Sigmoid colon (tissue), 7 donors: ENCODE measurements at regions of chr7 and their contacts with region 1.

Region 1: GRCh38 chr7:107579885-107580715 is at the start of gene BCAP29:
- DNase-seq: peak; percentile 84
- H3K4me3 ChIP-seq: peak within 1 kb of the TSS; percentile 60 to 92 (median 75)
- H3K27ac ChIP-seq: peak within 1 kb of the TSS; percentile 92 to 96 (median 94)
- H3K4me1 ChIP-seq: peaks cover 0 to 39% (median 25%) of the 10 kb centered on the region in 4 donors
- H3K27me3 ChIP-seq: no peaks in the 10 kb centered on the region
- CTCF ChIP-seq: peak in 1 of 4 experiments; percentile 4
- EP300 ChIP-seq: no peak
- POLR2A ChIP-seq: no peak
- total RNA-seq, gene BCAP29: 104 to 173 (median 137) TPM

Region 2: GRCh38 chr7:107725151-107725740 is 145.1 kb after region 1 on chr7:
- intact Hi-C with region 1: loop called (anchors 5 kb)
- DNase-seq: no peak
- H3K4me3 ChIP-seq: no peak overlapping the region
- H3K27ac ChIP-seq: no peak overlapping the region
- H3K4me1 ChIP-seq: no peaks in the 10 kb centered on the region
- H3K27me3 ChIP-seq: no peaks in the 10 kb centered on the region
- CTCF ChIP-seq: peak; percentile 44 to 69 (median 50)
- EP300 ChIP-seq: no peak
- POLR2A ChIP-seq: no peak